Left cardiac atrium (tissue), 4 donors: ENCODE measurements at regions of chr19 and their contacts with region 1.

Region 1: GRCh38 chr19:17340302-17340870 is 3.0 kb downstream of the GTPBP3 start:
- DNase-seq: no peak
- ATAC-seq: no peak

Region 2: DNA sequence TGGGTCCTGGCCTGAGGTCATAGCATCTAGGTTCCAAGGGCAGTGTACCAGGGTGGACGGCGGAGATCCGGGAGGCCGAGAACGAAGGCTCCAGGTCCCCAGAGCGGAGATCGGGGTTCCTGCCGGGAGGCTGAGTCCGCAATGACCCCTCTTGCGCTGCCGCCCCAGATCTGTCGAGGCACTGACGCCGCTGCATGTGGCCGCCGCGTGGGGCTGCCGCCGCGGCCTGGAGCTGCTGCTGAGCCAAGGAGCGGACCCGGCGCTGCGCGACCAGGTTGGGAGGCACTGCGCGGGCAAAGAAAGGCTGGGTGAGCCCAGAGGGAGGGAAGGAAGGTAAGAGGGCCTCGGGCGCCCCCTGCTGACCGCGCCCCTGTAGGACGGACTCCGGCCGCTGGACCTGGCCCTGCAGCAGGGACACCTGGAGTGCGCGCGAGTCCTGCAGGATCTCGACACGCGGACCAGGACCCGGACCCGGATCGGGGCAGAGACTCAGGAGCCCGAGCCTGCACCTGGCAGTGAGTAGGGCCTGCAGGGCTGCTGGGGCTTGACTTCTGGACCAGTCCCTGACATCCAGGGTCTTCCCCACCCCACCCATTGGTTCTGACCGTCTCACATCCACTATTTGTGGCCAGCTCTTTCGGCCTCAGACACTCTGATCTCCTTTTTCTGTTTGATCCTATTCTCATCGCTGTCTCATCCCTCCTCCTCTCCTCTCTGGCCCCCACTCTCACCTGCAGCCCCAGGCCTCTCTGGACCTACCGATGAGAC is 57.7 kb before region 1 on chr19:
- intact Hi-C with region 1: no loop called
- DNase-seq: peak; percentile 85
- ATAC-seq: peak; percentile 95 to 96

Region 3: GRCh38 chr19:17303167-17303939 is 37.0 kb before region 1 on chr19 and contains the start of gene ABHD8:
- intact Hi-C with region 1: loop called in 1 of 2 experiments (anchors 5 kb)
- DNase-seq: peak; percentile 97
- ATAC-seq: peak; percentile 86 to 89
- total RNA-seq, gene ABHD8: 11.2 to 11.6 TPM